ENCODE measurements at regions of chr20 and their contacts with region 1.

Region 1: GRCh38 chr20:48695207-48695635 is 132.6 kb downstream of the PREX1 start:
- DNase-seq: no peak
- ATAC-seq: no peak
- H3K4me3 ChIP-seq: no peak overlapping the region
- H3K27ac ChIP-seq: no peak overlapping the region
- H3K4me1 ChIP-seq: no peaks in the 10 kb centered on the region
- H3K27me3 ChIP-seq: no peaks in the 10 kb centered on the region
- CTCF ChIP-seq: no peak
- EP300 ChIP-seq: no peak
- POLR2A ChIP-seq: no peak
- RAD21 ChIP-seq: no peak

Region 2: GRCh38 chr20:48489656-48490055 is 205.6 kb before region 1 on chr20:
- CTCF ChIA-PET with region 1: no interaction called
- POLR2A ChIA-PET with region 1: no interaction called
- RAD21 ChIA-PET with region 1: no interaction called
- SMC1A ChIA-PET with region 1: no interaction called
- in situ Hi-C with region 1: no loop called
- intact Hi-C with region 1: no loop called
- DNase-seq: no peak
- ATAC-seq: peak; percentile 10
- H3K4me3 ChIP-seq: no peak overlapping the region
- H3K27ac ChIP-seq: no peak overlapping the region
- H3K4me1 ChIP-seq: peaks cover 12% of the 10 kb centered on the region
- H3K27me3 ChIP-seq: no peaks in the 10 kb centered on the region
- CTCF ChIP-seq: no peak
- EP300 ChIP-seq: no peak
- POLR2A ChIP-seq: no peak
- RAD21 ChIP-seq: no peak

Region 3: GRCh38 chr20:48716086-48716485 is 20.9 kb after region 1 on chr20:
- CTCF ChIA-PET with region 1: no interaction called
- POLR2A ChIA-PET with region 1: no interaction called
- RAD21 ChIA-PET with region 1: no interaction called
- SMC1A ChIA-PET with region 1: interaction called, 11 read pairs
- in situ Hi-C with region 1: no loop called
- intact Hi-C with region 1: no loop called
- DNase-seq: no peak
- ATAC-seq: no peak
- H3K4me3 ChIP-seq: no peak overlapping the region
- H3K27ac ChIP-seq: peak overlapping the region; percentile 87
- H3K4me1 ChIP-seq: peaks cover 84% of the 10 kb centered on the region
- H3K27me3 ChIP-seq: no peaks in the 10 kb centered on the region
- CTCF ChIP-seq: no peak
- EP300 ChIP-seq: no peak
- POLR2A ChIP-seq: no peak
- RAD21 ChIP-seq: no peak

Region 4: GRCh38 chr20:48760403-48760983 is 65.3 kb after region 1 on chr20:
- CTCF ChIA-PET with region 1: no interaction called
- POLR2A ChIA-PET with region 1: no interaction called
- RAD21 ChIA-PET with region 1: no interaction called
- SMC1A ChIA-PET with region 1: no interaction called
- in situ Hi-C with region 1: no loop called
- intact Hi-C with region 1: no loop called
- DNase-seq: no peak
- ATAC-seq: peak; percentile 83
- H3K4me3 ChIP-seq: peak overlapping the region; percentile 43; the same call in 1 of the 2 replicates
- H3K27ac ChIP-seq: peak overlapping the region; percentile 77
- H3K4me1 ChIP-seq: peaks cover 53% of the 10 kb centered on the region
- H3K27me3 ChIP-seq: no peaks in the 10 kb centered on the region
- CTCF ChIP-seq: no peak
- EP300 ChIP-seq: no peak; a peak in 1 of 4 replicates
- POLR2A ChIP-seq: peak; percentile 57; the same call in 1 of the 2 replicates
- RAD21 ChIP-seq: 0 out of 2 replicates have a peak, but pooled peaks have one; percentile 2

Region 5: GRCh38 chr20:48791015-48791514 is 95.8 kb after region 1 on chr20:
- CTCF ChIA-PET with region 1: no interaction called
- POLR2A ChIA-PET with region 1: no interaction called
- RAD21 ChIA-PET with region 1: no interaction called
- SMC1A ChIA-PET with region 1: no interaction called
- in situ Hi-C with region 1: no loop called
- intact Hi-C with region 1: no loop called
- DNase-seq: no peak
- ATAC-seq: no peak
- H3K4me3 ChIP-seq: peak overlapping the region; percentile 3; the same call in 1 of the 2 replicates
- H3K27ac ChIP-seq: 0 out of 2 replicates have a peak overlapping the region, but pooled peaks have one; percentile 10
- H3K4me1 ChIP-seq: peaks cover 60% of the 10 kb centered on the region
- H3K27me3 ChIP-seq: no peaks in the 10 kb centered on the region
- CTCF ChIP-seq: no peak; a peak in 1 of 6 replicates
- EP300 ChIP-seq: no peak
- POLR2A ChIP-seq: no peak
- RAD21 ChIP-seq: peak; percentile 27; the same call in 1 of the 2 replicates

Measured in GM12878 (cell line).